Sciatic nerve (tissue), 2 donors: ENCODE measurements at regions of chr17 and their contacts with region 1.

Region 1: DNA sequence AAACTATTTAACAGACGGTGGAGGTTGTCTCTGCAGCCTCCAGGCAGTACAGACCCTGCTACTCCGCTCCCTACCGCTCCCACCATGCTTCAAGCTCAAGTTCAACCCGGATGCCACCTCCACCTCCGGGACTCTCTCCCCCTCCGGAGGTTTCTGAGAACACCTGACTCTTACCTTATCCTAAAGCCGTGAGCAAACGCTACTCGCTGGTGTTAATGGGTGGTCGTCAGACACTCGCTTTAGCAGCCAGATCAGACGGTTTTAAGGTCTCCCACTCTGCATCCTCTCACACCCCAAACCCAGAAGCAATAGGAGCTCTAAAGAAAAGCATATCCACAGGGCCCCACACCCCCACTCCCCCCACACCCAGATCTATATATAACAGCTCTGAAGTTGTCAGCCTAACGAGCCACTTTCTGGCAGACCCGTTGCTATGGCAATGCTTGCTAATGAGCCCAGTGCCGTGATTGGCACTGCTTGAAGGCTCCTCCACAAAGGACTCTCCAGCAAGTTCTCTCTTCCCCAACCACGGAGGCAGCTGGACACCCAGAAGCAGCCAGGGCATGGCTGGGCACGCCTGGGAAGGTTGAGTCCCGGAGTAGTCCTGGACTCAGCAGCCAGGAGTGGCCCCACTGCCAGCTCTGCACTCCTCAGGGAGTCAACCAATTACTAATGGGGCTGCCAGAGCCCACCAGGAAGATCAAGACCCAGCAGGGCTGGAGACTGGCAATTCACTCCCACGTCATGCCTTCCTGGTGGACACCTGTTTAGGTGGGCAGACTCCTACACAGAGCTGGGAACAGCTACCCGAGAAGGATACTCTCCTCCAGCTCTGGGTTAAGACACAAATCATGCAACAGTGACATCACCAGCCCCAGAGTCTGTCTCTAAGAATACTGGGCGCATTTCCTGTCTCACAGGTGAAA is 121.2 kb upstream of the RCVRN start:
- DNase-seq: no peak
- ATAC-seq: no peak

Region 2: DNA sequence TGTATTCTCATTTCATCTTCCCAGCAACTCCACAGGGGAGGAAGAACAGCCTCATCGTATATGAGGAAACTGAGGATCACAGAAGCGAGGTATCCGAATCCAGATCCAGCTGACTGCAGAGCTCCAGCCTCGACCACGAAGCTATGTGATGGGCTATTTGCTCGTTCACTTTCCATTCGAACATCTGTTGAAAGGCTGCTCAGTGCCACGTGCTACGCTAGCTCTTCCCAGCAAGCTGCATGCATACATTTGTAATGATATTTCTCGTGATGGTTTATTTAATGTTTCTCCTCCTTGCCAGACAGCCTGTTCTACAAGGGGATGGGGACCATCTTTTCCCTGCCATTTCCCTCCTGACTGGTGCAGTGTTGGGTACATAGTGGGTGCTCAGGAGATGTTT is 72.7 kb before region 1 on chr17:
- intact Hi-C with region 1: loop called (anchors 5 kb)
- DNase-seq: no peak
- ATAC-seq: no peak